ENCODE measurements at regions of chr5 and their contacts with region 1.

Region 1: GRCh38 chr5:40736103-40736875 is 19.5 kb downstream of the TTC33 start:
- DNase-seq: peak; percentile 77
- H3K4me3 Mint-ChIP-seq: no peak overlapping the region
- H3K27ac Mint-ChIP-seq: peak overlapping the region; percentile 12
- H3K4me1 Mint-ChIP-seq: peaks cover 18% of the 10 kb centered on the region
- H3K27me3 Mint-ChIP-seq: no peaks in the 10 kb centered on the region

Region 2: DNA sequence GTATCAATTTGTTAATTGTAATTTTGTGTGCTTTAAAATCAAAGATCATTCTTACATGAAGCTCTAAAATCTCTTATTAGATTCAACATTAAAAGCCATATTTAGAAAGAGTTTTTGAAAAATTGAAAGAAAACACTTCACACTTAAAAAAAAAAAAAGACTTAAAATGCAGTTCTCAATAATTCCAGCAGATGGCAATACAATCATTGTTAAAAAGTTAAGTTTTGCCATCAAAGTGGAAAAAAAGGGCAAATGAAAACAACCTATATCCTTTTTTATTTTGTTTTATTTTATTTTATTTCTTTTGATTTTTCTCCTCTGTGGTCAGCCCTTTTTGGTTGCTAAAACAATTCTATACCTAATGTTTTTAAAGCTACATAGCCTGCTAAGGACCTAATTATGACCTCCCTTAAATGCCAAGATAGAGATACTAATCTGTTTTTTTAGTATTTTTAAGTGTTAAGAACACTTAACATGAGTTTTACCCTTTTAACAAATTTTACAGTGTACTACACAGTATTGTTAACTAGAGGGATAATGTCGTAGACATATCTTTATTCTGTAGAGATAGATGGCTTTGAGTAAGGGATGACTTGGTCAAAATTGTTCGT is 1157.3 kb before region 1 on chr5:
- intact Hi-C with region 1: loop called (anchors 2 kb)
- DNase-seq: no peak
- H3K4me3 Mint-ChIP-seq: no peak overlapping the region
- H3K27ac Mint-ChIP-seq: no peak overlapping the region
- H3K4me1 Mint-ChIP-seq: peaks cover 6% of the 10 kb centered on the region
- H3K27me3 Mint-ChIP-seq: peaks cover 19% of the 10 kb centered on the region

Region 3: DNA sequence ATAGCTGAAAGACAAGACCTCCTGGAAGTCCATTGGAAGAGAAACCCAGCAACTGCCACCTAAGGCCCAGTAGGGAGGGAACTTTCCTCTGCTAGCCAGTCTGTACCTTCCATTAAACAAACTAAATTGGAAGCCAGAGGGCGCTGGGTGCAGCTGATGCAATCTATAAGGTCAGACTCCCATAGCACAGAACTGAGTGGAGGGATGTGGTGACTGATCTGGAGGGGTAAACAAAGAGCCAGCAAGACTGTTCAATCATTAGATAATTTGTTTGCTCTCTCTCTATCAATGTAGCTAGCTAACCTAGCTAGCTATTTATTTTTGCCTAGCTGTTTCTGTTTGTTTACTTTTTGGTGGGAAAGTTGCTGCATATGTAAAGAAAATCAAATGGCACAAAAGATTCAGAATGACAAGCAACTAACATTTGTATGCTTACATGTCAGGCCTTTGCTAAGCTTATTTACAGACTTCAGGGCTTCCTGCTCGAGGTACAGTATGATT is 1019.7 kb before region 1 on chr5:
- intact Hi-C with region 1: loop called (anchors 1 kb)
- DNase-seq: peak; percentile 75
- H3K4me3 Mint-ChIP-seq: no peak overlapping the region
- H3K27ac Mint-ChIP-seq: no peak overlapping the region
- H3K4me1 Mint-ChIP-seq: no peaks in the 10 kb centered on the region
- H3K27me3 Mint-ChIP-seq: peaks cover 2% of the 10 kb centered on the region

Region 4: DNA sequence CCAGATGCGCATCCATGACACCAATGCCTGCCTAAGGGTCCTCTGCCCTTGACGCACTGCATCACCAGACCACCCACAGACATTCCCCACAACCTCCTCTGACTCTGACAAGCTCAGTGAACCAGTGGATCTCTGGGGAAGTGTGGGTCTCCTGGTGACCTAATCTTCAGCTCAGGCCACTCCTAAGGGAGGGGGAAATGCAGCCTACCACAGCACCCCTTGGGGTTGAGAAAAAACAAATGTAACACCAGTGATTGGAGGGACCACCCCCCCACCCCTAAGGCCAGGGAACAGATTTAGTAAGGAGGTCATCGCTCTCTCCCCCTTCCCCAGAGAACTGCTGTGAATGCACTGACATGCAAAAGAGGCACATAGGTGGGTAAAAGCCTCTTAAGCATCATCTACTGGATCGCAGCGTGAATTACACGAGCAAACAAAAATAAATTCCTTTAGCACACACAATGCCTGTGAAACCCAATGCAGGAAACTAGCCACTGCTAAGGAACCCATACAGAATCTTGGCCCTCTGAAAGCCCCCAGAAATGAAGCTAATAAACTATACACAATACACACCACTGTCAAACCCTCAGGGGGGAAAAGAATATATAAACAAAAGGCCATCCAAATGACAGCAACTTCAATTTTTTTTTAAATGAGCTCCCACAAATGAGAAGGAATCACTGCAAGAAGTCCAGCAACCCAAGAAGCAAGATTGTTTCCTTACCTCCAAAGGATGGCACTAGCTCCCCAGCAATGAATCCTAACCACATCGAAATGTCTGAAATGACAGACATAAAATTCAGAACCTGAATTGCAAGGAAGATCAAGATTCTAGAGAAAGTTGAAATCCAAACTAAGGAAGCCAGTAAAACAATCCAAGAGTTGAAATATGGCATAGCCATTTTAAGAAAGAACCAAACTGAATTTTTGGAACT is 570.2 kb before region 1 on chr5:
- intact Hi-C with region 1: loop called (anchors 5 kb)
- DNase-seq: peak; percentile 63
- H3K4me3 Mint-ChIP-seq: no peak overlapping the region
- H3K27ac Mint-ChIP-seq: no peak overlapping the region
- H3K4me1 Mint-ChIP-seq: peaks cover 5% of the 10 kb centered on the region
- H3K27me3 Mint-ChIP-seq: no peaks in the 10 kb centered on the region

Measured in activated CD4-positive, alpha-beta T cell treated with anti-CD3 and anti-CD28 coated beads, Interleukin-2, amount 10 ng/mL, durations not matched to agents 24 days and 14 days (primary cell).